AG04450 (cell line): ENCODE measurements at regions of chr2 and their contacts with region 1.

Region 1: DNA sequence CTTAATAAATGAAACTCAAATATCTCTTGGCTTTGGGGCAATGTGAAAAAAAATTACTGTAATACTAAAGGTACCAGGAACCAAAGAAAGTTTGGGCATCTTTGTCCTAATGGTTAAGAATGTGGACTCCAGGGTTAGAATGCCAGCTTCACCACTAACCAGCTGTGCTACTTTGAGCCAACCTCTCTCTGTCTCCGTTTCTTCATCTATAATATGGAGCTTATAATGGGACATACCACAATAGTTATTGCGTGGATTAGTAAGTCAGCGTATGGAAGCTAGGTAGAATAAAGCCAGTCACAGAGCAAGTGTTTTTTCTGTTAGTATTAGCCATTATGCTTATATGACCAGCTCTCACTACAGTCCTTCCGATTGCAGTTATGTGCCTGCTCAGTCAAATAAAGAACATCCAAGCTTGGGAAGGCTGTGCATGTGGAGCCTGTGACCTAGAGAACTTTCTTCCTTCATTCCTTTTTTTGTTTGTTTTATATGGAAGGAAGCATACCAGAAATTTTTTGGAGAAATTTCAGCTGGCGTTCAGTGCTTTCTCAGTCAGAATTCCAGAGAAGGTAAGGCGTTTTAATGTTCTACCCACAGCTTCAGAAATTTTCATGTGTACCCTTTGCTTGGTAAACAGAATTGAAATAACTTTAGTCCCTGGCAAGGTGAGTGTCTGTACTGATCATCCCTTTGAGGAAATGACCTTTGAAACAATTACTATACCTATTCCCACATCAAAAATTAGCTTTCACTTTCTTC is 114.0 kb upstream of the RND3 start:
- DNase-seq: no peak
- H3K4me3 ChIP-seq: no peak overlapping the region
- H3K27ac ChIP-seq: peak overlapping the region; percentile 68
- H3K27me3 ChIP-seq: no peaks in the 10 kb centered on the region
- CTCF ChIP-seq: no peak

Region 2: GRCh38 chr2:149765003-149765402 is 836.5 kb before region 1 on chr2:
- CTCF ChIA-PET with region 1: interaction called, 10 read pairs
- POLR2A ChIA-PET with region 1: no interaction called
- DNase-seq: no peak
- H3K4me3 ChIP-seq: no peak overlapping the region
- H3K27ac ChIP-seq: no peak overlapping the region
- H3K27me3 ChIP-seq: no peaks in the 10 kb centered on the region
- CTCF ChIP-seq: no peak

Region 3: DNA sequence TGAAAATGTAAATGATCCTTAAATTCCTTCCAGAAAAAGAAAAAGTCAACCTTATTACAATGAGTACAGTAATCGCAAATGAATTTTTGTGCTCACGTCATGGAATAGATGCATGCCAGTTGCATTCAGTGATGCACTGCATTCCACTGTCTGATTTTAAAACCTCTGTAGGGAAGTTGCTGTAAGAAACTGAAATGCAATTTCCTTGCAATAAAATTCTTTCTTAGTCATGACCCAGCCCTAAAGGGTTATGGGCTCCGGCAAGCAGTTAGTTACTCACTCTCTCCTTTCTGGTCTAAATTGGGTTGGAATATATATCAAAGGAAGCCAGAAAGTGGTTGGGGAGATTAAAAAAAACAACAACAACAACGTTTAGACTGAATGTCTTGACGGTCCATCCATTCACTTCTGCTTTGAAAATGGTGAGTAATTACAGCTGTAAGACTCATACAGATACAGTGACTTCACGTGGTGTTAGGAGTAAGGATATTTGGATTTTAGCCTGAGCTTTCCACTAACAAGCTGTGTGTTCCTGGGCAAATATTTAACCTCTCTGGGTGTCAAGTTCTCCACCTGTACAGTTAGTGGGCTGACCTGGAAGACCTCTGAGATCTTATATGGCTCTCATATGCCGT is 105.3 kb before region 1 on chr2:
- CTCF ChIA-PET with region 1: no interaction called
- POLR2A ChIA-PET with region 1: interaction called, 11 read pairs
- DNase-seq: peak; percentile 90
- H3K4me3 ChIP-seq: peak overlapping the region; percentile 25
- H3K27ac ChIP-seq: peak overlapping the region; percentile 96
- H3K27me3 ChIP-seq: no peaks in the 10 kb centered on the region
- CTCF ChIP-seq: no peak

Region 4: DNA sequence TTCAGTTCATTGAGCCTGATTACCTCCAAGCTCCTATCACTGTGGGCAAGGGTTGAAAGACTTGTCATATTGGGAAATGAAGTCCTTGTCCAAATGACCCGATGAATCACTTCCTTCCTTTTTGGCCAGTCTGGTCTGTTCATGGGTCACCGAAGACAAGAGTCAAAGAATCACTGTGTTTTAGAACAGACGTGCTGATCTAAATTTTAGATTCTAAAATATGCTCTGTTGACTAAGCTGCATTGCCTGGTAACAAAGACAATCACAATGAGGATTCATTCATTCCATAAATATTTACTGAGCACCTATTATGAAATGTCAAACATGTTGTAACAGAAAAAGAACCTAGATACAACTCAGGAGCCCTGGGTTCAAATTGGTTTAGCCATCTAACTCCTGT is 14.6 kb before region 1 on chr2:
- CTCF ChIA-PET with region 1: interaction called, 3 read pairs
- POLR2A ChIA-PET with region 1: interaction called, 12 read pairs
- DNase-seq: no peak
- H3K4me3 ChIP-seq: no peak overlapping the region
- H3K27ac ChIP-seq: no peak overlapping the region
- H3K27me3 ChIP-seq: no peaks in the 10 kb centered on the region
- CTCF ChIP-seq: no peak